PC-3 (cell line): ENCODE measurements at regions of chr2 and their contacts with region 1.

Region 1: DNA sequence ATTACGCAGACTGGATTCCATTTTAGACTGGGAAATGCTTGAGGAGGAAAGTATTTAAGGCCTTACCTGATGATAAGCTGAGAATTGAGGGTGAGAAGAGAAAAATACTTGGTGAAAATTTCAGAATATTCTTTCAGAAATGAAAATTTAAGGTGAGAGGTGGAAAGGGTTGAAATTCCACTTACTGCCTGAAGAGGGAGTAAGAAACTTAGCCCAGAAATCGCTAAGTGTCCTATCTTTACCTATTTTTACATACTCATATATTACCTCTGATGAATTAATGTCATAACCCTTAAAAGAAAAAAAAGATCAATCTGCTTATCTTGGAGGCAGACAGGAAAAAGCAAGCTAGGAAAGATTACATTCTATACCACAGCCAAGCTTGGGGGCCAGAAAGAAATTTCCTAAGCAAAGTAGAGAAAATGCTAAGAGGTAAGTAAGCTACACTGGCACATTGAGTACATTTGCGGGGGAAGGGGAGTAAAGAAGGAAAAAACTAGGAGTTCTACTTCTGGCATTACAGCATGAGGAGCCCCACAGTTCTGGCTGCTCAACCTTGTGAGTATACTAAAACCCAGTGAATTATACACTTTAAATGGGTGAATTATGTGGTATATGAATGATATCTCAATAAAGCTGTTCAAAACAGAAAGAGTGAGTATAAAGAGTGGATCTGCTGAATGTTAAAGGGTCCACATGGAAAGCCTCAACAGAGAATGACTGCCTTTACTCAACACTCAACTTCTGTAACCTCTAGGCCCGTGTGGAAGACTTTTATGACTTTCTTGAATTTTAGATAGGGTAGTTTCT is 33.8 kb downstream of the SMC6 start:
- DNase-seq: peak; percentile 47
- ATAC-seq: peak; percentile 46
- H3K4me3 ChIP-seq: no peak overlapping the region
- H3K27ac ChIP-seq: no peak overlapping the region
- H3K4me1 ChIP-seq: no peaks in the 10 kb centered on the region
- H3K27me3 ChIP-seq: no peaks in the 10 kb centered on the region
- CTCF ChIP-seq: peak; percentile 76

Region 2: DNA sequence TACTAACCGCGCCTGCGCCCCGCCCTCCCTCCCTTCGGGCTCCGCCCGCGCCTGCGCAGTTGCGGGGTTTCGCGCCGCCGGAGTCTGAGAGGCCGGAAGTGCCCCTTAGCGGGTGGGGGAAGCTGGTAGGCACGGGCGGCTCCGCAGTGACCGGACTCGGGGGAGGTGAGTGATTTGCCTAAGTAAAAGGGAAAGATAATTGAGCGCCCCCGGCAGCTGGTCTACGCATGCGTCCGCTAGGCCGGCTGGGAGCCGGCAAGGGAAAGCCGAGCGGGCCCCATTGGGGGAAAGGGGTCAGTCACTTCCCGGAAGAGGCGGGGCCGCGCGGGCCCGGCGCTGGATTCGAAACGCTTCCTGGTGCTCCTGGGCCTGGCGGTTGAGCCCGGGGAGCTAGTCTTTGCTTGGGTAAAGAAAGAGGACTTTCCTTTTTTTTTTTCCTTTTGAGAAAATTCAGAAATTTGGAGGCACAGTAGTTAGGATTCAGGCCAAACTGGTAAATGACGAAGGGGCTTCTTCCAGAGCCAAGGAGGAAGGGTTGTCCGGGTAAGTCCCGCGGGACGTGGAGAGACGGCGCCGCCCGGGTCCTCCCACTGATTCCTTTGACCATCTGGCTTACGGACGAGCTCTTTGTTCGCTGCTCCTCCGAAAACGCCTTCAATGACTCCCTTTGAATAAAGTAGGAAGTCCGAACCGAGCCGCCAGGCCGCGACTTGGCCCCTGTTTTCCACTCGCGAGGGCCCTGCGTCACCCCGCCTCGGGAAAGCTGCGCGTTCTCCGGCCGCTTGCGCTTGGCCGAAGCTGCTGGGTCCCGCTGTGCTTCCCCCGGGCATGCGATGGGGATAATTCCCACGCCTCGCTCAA is 34.3 kb after region 1 on chr2 and contains the starts of genes GEN1 and SMC6:
- CTCF ChIA-PET with region 1: no interaction called
- POLR2A ChIA-PET with region 1: no interaction called
- intact Hi-C with region 1: loop called (anchors 1 kb)
- DNase-seq: peak; percentile 86
- ATAC-seq: peak; percentile 77
- H3K4me3 ChIP-seq: peak within 1 kb of the TSS; percentile 97
- H3K27ac ChIP-seq: peak within 1 kb of the TSS; percentile 95
- H3K4me1 ChIP-seq: peaks cover 31% of the 10 kb centered on the region
- H3K27me3 ChIP-seq: no peaks in the 10 kb centered on the region
- CTCF ChIP-seq: no peak
- total RNA-seq, gene GEN1: 21.1 and 21.4 TPM in 2 replicates
- total RNA-seq, gene SMC6: 14.1 and 15.6 TPM in 2 replicates

Region 3: GRCh38 chr2:18149645-18150246 is 430.0 kb after region 1 on chr2:
- CTCF ChIA-PET with region 1: no interaction called
- POLR2A ChIA-PET with region 1: no interaction called
- intact Hi-C with region 1: loop called (anchors 10 kb)
- DNase-seq: peak; percentile 81
- ATAC-seq: peak; percentile 37; the same call in 1 of the 2 replicates
- H3K4me3 ChIP-seq: no peak overlapping the region
- H3K27ac ChIP-seq: no peak overlapping the region
- H3K4me1 ChIP-seq: peaks cover 10% of the 10 kb centered on the region
- H3K27me3 ChIP-seq: no peaks in the 10 kb centered on the region; the same call in 1 of the 2 replicates
- CTCF ChIP-seq: peak; percentile 83